ENCODE measurements at regions of chr12 and their contacts with region 1.

Region 1: GRCh38 chr12:75366629-75367028 is 24.3 kb upstream of the GLIPR1L2 start:
- DNase-seq: no peak
- H3K4me3 ChIP-seq: no peak overlapping the region
- H3K27ac ChIP-seq: no peak overlapping the region
- H3K4me1 ChIP-seq: no peaks in the 10 kb centered on the region
- CTCF ChIP-seq: no peak

Region 2: DNA sequence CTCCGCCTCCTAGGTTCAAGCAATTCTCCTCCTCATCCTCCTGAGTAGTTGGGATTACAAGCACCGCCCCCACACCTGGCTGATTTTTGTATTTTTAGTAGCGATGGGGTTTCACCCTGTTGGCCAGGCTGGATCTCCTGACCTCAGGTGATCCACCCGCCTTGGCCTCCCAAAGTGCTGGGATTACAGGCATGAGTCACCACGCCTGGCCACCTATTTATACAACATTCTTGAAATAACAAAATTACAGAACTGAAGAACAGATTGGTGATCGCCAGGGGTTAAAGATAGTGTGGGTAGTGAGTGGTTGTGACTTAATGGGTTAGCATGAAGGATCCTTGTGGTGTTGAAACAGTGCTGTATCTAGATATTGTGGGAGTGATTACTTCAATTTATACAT is 24.8 kb before region 1 on chr12:
- CTCF ChIA-PET with region 1: no interaction called
- POLR2A ChIA-PET with region 1: interaction called, 3 read pairs
- intact Hi-C with region 1: loop called (anchors 2 kb)
- DNase-seq: no peak
- H3K4me3 ChIP-seq: no peak overlapping the region
- H3K27ac ChIP-seq: no peak overlapping the region
- H3K4me1 ChIP-seq: no peaks in the 10 kb centered on the region
- CTCF ChIP-seq: no peak

Region 3: GRCh38 chr12:75378354-75378753 is 11.7 kb after region 1 on chr12:
- CTCF ChIA-PET with region 1: no interaction called
- POLR2A ChIA-PET with region 1: no interaction called
- intact Hi-C with region 1: no loop called
- DNase-seq: no peak
- H3K4me3 ChIP-seq: no peak overlapping the region
- H3K27ac ChIP-seq: no peak overlapping the region
- H3K4me1 ChIP-seq: no peaks in the 10 kb centered on the region
- CTCF ChIP-seq: no peak